ENCODE measurements at regions of chr1 and their contacts with region 1.

Region 1: DNA sequence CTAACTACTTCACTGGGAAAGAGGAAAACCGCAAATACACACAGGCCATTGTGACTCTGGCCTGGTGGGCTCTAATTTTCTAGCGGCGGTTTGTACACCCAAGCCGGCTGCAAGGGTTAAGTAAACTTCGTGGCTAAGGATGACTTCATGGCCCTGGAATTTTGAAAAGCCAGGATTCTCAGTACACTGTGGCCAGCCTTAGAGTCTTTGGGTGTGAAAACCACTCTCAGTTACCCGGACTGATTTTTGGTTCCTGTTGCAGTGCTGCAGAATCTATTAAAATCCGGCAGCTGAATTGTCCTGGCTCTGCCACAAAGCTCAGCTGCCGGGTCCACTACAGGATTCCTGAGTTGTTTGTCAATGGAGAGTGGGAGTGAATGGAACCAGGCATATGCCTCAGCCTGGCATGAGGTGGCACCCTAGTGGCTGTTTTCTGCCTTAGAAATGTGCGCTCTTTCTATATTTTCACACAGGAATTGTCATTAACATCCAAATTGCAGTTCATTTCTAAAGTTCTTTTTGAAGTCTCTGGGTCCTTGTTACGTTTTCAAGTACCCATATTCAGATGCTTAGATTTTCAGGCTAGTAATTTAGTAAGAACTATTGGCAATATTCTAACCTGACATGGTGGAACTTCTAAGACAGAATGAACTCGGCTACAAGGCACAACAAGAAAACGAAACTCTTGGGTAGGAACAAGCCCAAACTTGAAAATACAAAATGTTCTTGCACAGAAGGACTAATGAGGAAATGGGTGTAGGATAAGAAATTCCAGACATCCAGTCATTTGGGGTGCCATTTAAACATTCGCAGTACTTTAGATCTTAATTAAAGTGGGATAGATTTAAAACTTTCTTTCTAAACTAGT is 255.9 kb downstream of the NFIA start:
- DNase-seq: no peak
- ATAC-seq: no peak
- H3K4me3 ChIP-seq: no peak overlapping the region
- H3K27ac ChIP-seq: no peak overlapping the region
- H3K4me1 ChIP-seq: no peaks in the 10 kb centered on the region
- H3K27me3 ChIP-seq: peaks cover 0 to 2% of the 10 kb centered on the region in 2 experiments; a peak in 3 of 4 replicates
- CTCF ChIP-seq: peak in 2 of 3 experiments; percentile 9 to 25; a peak in 2 of 6 replicates
- EP300 ChIP-seq: no peak
- POLR2A ChIP-seq: no peak
- RAD21 ChIP-seq: no peak

Region 2: DNA sequence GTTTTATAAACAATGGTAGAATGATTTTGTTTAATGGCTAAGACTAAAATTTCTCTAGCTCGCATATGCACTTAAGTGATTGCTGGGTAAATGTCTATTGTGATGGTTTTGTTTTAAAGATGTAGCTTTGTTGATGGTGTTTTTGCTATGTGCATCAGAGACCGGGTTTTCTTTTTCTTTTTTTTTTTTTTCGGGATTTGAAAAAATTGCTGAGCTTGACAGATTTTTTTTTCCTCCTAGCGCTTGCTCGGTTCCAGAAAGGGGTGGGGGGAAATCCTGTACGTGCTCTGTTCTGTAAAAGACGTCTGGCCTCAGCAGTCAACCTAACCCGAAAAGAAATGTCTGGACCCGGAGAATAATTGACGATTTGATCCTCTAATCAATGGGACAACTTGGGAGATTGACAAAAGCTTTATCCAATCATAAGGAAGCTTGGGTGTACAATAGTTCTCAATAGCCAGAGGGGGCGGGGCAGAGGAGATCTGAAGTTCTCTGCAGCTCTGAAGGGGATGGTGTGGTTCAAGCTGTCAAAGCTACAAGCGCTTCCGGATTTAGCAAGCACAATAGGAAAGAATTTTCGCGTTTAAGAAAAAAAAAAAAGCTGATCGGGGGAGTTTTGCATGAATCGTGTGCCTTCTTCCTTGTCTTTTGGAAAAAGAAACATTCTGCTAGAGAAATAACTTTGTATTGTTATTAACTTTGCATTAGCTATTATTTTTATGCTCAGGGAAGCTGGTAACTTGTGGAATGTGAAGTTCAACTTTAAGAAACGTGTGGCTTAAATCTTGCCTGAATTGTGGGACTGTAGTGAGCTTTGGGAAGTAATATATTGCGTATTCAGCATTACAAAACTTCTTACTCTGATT is 260.3 kb before region 1 on chr1:
- CTCF ChIA-PET with region 1: no interaction called
- POLR2A ChIA-PET with region 1: no interaction called
- RAD21 ChIA-PET with region 1: no interaction called
- SMC1A ChIA-PET with region 1: no interaction called
- in situ Hi-C with region 1: no loop called
- intact Hi-C with region 1: loop called (anchors 10 kb)
- DNase-seq: peak; percentile 63
- ATAC-seq: peak; percentile 66
- H3K4me3 ChIP-seq: peak overlapping the region; percentile 62
- H3K27ac ChIP-seq: no peak overlapping the region
- H3K4me1 ChIP-seq: peaks cover 5% of the 10 kb centered on the region
- H3K27me3 ChIP-seq: peaks cover 2 to 26% of the 10 kb centered on the region in 2 experiments
- CTCF ChIP-seq: no peak
- EP300 ChIP-seq: no peak
- POLR2A ChIP-seq: no peak
- RAD21 ChIP-seq: no peak

Region 3: DNA sequence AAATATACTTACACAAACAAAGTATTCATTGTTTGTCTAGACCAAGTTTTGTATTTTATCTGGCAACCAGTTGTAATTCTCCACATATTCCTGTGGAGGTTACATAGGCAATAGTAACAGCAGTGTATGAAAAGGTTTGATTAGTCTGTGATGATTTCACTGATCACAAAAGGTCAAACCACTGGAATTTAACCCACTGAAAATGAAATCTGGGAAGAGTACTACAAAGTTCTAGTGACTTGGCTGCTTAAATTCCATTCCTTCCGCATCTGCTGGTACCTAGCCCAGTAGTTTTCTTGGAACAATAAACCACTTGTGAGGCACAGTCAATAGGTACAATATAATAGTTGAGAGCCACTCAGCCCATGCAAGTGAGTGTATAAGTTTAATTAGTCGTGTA is 50.5 kb before region 1 on chr1:
- CTCF ChIA-PET with region 1: no interaction called
- POLR2A ChIA-PET with region 1: no interaction called
- RAD21 ChIA-PET with region 1: no interaction called
- SMC1A ChIA-PET with region 1: no interaction called
- in situ Hi-C with region 1: no loop called
- intact Hi-C with region 1: no loop called
- DNase-seq: no peak
- ATAC-seq: no peak
- H3K4me3 ChIP-seq: no peak overlapping the region
- H3K27ac ChIP-seq: no peak overlapping the region
- H3K4me1 ChIP-seq: peaks cover 4% of the 10 kb centered on the region; the same call in 1 of the 2 replicates
- H3K27me3 ChIP-seq: 0 out of 4 replicates have a peak, but pooled peaks cover 0 to 3% of the 10 kb centered on the region in 2 experiments
- CTCF ChIP-seq: no peak
- EP300 ChIP-seq: no peak
- POLR2A ChIP-seq: no peak
- RAD21 ChIP-seq: no peak